PC-3 (cell line): ENCODE measurements at regions of chr3 and their contacts with region 1.

Region 1: DNA sequence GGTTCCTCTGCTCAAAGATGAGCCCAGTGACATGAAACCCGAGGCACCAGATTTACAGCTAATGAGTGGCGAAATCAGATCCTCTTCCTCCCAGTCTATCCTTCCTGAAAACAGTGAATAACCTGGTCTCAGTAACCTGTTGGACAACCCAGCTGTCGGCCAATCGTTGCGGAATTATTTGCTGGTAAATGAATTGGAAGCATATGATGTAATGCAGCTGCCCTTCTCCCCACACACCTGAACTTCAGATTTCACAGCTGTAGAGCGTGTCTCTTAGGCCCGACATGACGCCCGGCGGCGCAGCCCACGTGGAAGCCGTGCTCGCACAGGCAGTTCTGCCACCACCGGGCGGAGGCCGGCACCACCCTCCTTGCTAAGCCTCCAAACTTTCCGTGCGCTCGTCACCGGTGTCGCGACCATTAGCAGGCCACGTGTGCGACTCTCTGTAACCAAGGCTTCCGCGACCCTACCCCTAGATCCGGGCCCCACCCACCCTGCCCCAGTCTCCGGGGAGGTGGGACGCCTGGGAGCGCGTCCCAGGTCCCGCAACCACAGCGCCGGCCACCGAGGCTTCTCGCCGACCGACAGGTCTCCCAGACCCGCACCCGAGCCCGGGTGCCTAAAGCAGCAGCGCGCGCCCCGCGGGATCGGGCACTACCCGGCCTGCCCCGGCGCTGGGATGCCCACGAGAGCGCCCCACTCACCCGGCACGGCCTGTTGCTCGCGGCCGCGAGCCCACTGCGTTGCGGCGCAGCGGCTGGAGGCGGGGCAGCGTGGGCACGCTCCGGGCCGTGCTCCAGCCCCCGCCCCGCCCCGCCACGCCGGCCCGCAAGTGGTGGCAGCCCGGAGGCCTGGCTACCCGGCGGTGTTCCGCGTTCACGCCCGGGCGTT is at the start of gene RIOX2:
- DNase-seq: peak; percentile 82
- ATAC-seq: peak; percentile 88
- H3K4me3 ChIP-seq: peak within 1 kb of the TSS; percentile 75
- H3K27ac ChIP-seq: peak within 1 kb of the TSS; percentile 40
- H3K4me1 ChIP-seq: peaks cover 22% of the 10 kb centered on the region
- H3K27me3 ChIP-seq: no peaks in the 10 kb centered on the region
- CTCF ChIP-seq: no peak
- total RNA-seq, gene RIOX2: 31.0 and 46.4 TPM in 2 replicates

Region 2: DNA sequence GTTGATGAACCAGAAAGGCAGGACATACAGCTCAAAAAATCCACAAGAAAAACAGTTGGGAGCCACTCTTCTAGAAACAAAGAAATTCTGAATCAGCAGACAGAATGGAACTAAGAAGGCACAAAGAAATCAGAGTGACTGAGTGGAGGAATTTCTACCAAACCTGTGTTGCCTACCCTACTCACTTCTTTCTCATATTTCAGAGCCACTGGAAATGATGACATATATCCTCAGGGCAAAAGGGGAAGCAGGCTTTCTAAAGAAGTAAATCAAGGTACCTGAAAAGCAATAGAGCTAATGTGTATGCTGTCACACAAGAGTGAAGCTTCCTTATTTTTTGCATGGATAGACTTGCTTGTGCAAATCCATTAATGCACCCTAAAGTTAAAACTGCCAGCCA is 412.5 kb before region 1 on chr3:
- CTCF ChIA-PET with region 1: no interaction called
- POLR2A ChIA-PET with region 1: no interaction called
- intact Hi-C with region 1: no loop called
- DNase-seq: no peak
- ATAC-seq: no peak
- H3K4me3 ChIP-seq: no peak overlapping the region
- H3K27ac ChIP-seq: no peak overlapping the region
- H3K4me1 ChIP-seq: no peaks in the 10 kb centered on the region
- H3K27me3 ChIP-seq: no peaks in the 10 kb centered on the region
- CTCF ChIP-seq: no peak

Region 3: GRCh38 chr3:97952280-97952679 is 19.6 kb before region 1 on chr3:
- CTCF ChIA-PET with region 1: no interaction called
- POLR2A ChIA-PET with region 1: interaction called, 10 read pairs
- intact Hi-C with region 1: no loop called
- DNase-seq: peak; percentile 25
- ATAC-seq: no peak
- H3K4me3 ChIP-seq: no peak overlapping the region
- H3K27ac ChIP-seq: peak overlapping the region; percentile 36; the same call in 1 of the 2 replicates
- H3K4me1 ChIP-seq: peaks cover 13% of the 10 kb centered on the region
- H3K27me3 ChIP-seq: no peaks in the 10 kb centered on the region
- CTCF ChIP-seq: no peak